ENCODE measurements at regions of chr10 and their contacts with region 1.

Region 1: DNA sequence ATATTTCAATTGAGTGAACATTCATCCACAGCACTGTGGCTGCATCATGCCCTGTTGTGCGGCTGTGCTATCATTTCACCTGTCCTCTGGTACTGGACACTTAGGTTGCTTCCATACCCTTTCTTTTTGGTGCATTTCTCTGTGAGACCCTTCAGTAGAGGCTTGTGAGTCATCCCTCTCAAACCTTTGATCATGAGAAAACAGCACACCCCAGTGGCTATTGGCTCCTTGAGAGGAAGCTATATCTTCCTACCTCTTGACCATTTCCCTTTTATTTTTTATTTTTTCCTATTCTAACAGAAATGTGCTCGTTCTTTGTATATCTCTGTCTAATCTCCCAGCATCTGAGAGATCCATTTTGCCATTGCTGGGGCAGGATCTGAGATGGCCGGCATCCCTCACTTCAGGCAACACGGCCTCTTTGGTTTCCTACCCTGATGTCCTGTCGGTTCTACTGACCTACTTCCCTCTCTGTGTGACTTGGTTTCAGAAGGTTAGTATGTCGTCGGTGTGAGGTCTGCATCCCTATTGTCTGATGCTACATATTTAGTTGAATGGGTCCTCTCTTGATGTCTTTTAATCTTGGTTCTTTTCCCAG is 23.8 kb upstream of the PIK3AP1 start:
- DNase-seq: no peak
- ATAC-seq: peak in 1 of 2 donors; percentile 23
- H3K4me3 ChIP-seq: no peak overlapping the region
- H3K27ac ChIP-seq: no peak overlapping the region
- H3K4me1 ChIP-seq: no peaks in the 10 kb centered on the region
- H3K27me3 ChIP-seq: no peaks in the 10 kb centered on the region

Region 2: GRCh38 chr10:96380817-96381216 is 363.3 kb before region 1 on chr10:
- intact Hi-C with region 1: loop called in 1 of 4 experiments (anchors 10 kb)
- DNase-seq: peak in 2 of 3 donors; percentile 25 to 67
- ATAC-seq: peak; percentile 68 to 78
- H3K4me3 ChIP-seq: no peak overlapping the region
- H3K27ac ChIP-seq: no peak overlapping the region
- H3K4me1 ChIP-seq: no peaks in the 10 kb centered on the region
- H3K27me3 ChIP-seq: no peaks in the 10 kb centered on the region